CD4-positive, alpha-beta memory T cell (primary cell): ENCODE measurements at regions of chr2 and their contacts with region 1.

Region 1: GRCh38 chr2:68467077-68467960 is at the starts of genes APLF and FBXO48:
- DNase-seq: peak; percentile 98 to 100 (median 99)
- H3K4me3 ChIP-seq: peak within 1 kb of the TSS; percentile 85 to 98
- H3K4me3 Mint-ChIP-seq: peak within 1 kb of the TSS; percentile 90 to 97 (median 96)
- H3K27ac ChIP-seq: peak within 1 kb of the TSS; percentile 96
- H3K27ac Mint-ChIP-seq: peak within 1 kb of the TSS; percentile 89 to 98 (median 97)
- H3K4me1 ChIP-seq: peaks cover 45% of the 10 kb centered on the region
- H3K4me1 Mint-ChIP-seq: peaks cover 25 to 55% (median 38%) of the 10 kb centered on the region in 4 donors
- H3K27me3 ChIP-seq: no peaks in the 10 kb centered on the region
- H3K27me3 Mint-ChIP-seq: no peaks in the 10 kb centered on the region
- total RNA-seq, gene APLF: 8.2 to 9.5 TPM
- total RNA-seq, gene FBXO48: 6.4 to 6.5 TPM

Region 2: DNA sequence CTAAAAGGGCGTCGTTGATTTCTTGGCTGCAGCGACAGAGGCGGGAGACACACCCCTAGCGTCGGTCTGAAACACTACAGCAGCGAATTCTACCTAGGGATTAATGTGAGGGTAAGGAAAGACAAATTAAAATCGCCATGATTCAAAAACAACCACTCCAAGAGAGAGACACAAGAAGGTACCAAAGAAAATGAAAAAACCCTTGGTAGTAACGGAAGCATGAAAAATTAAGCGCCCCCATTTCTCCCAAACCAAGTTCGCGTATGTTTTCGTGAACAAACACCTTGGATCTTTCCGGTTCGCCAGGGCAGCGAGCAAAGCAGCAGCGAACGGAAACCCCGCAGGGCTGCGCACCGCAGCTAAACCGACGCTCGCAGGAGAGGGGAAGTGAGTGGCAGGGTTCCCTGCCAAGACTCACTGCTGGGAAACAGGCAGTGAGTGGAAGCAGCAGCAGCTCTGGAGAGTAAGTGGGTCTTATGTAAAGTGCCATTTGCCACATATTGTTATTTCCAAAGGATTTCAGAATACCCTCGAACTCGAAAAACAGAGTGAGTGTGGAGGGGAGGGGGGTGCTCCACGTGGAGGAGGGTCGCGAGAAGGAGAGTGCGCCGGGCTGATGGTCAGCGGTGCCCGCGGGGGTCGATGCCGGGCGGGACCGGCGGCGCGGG is 216.0 kb before region 1 on chr2:
- CTCF ChIA-PET with region 1: no interaction called
- POLR2A ChIA-PET with region 1: interaction called, 7 read pairs
- intact Hi-C with region 1: loop called (anchors 5 kb)
- DNase-seq: peak; percentile 81 to 93 (median 86)
- H3K4me3 ChIP-seq: peak overlapping the region; percentile 66 to 83
- H3K4me3 Mint-ChIP-seq: peak overlapping the region in 7 of 8 donors; percentile 87 to 100 (median 94)
- H3K27ac ChIP-seq: peak overlapping the region; percentile 91
- H3K27ac Mint-ChIP-seq: peak overlapping the region in 6 of 7 donors; percentile 91 to 99 (median 97)
- H3K4me1 ChIP-seq: peaks cover 70% of the 10 kb centered on the region
- H3K4me1 Mint-ChIP-seq: peaks cover 20 to 59% (median 34%) of the 10 kb centered on the region in 4 donors
- H3K27me3 ChIP-seq: no peaks in the 10 kb centered on the region
- H3K27me3 Mint-ChIP-seq: peaks cover 0 to 4% of the 10 kb centered on the region in 2 donors

Region 3: DNA sequence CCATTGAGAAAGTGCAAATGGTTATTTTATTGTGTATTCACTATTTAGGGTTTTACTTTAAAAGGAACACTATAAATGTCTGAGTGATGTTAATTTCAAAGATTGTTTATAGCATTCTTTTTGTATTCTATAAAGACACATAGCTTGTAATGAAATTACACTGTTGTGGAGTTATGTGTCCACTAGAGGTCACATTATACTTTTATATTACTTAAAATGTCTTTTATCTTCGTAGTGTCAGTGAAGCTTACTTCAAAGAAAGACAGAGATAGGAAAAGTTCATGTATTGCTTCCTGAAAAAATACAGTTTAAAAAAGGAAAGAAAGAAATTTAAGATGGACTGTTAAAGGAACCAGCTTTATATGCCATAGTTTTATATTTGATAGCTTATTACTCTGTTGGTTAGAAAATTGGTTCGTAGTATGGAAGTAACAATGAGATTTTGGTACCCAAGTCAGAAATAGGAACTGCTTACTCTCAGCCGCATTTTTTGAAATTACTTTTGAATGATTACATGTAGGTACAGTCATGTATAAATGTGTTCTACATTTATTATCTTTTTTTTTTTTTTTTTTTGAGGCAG is 20.5 kb after region 1 on chr2:
- CTCF ChIA-PET with region 1: interaction called, 38 read pairs
- POLR2A ChIA-PET with region 1: interaction called, 17 read pairs
- intact Hi-C with region 1: loop called (anchors 2 kb)
- DNase-seq: peak in 4 of 5 donors; percentile 24 to 39 (median 31)
- H3K4me3 ChIP-seq: no peak overlapping the region
- H3K4me3 Mint-ChIP-seq: peak overlapping the region in 1 of 8 donors; percentile 28
- H3K27ac ChIP-seq: no peak overlapping the region
- H3K27ac Mint-ChIP-seq: peak overlapping the region in 2 of 7 donors; percentile 35 to 38
- H3K4me1 ChIP-seq: no peaks in the 10 kb centered on the region
- H3K4me1 Mint-ChIP-seq: peaks cover 0 to 5% (median 1%) of the 10 kb centered on the region in 4 donors
- H3K27me3 ChIP-seq: no peaks in the 10 kb centered on the region
- H3K27me3 Mint-ChIP-seq: no peaks in the 10 kb centered on the region

Region 4: GRCh38 chr2:68709421-68709911 is 242.1 kb after region 1 on chr2:
- CTCF ChIA-PET with region 1: interaction called, 64 read pairs
- POLR2A ChIA-PET with region 1: interaction called, 5 read pairs
- intact Hi-C with region 1: loop called (anchors 2 kb)
- DNase-seq: peak in 3 of 5 donors; percentile 29 to 47 (median 40)
- H3K4me3 ChIP-seq: no peak overlapping the region
- H3K4me3 Mint-ChIP-seq: peak overlapping the region in 3 of 8 donors; percentile 27 to 67 (median 30)
- H3K27ac ChIP-seq: peak overlapping the region; percentile 24
- H3K27ac Mint-ChIP-seq: peak overlapping the region; percentile 60 to 82 (median 68)
- H3K4me1 ChIP-seq: peaks cover 10% of the 10 kb centered on the region
- H3K4me1 Mint-ChIP-seq: peaks cover 13 to 37% (median 20%) of the 10 kb centered on the region in 4 donors
- H3K27me3 ChIP-seq: no peaks in the 10 kb centered on the region
- H3K27me3 Mint-ChIP-seq: no peaks in the 10 kb centered on the region

Region 5: GRCh38 chr2:68751397-68752339 is 284.3 kb after region 1 on chr2:
- CTCF ChIA-PET with region 1: interaction called, 18 read pairs
- POLR2A ChIA-PET with region 1: interaction called, 8 read pairs
- intact Hi-C with region 1: loop called (anchors 1 kb)
- DNase-seq: peak; percentile 84 to 90 (median 85)
- H3K4me3 ChIP-seq: peak overlapping the region in 1 of 2 donors; percentile 5
- H3K4me3 Mint-ChIP-seq: peak overlapping the region in 7 of 8 donors; percentile 29 to 86 (median 62)
- H3K27ac ChIP-seq: peak overlapping the region; percentile 56
- H3K27ac Mint-ChIP-seq: peak overlapping the region; percentile 83 to 96 (median 94)
- H3K4me1 ChIP-seq: peaks cover 97% of the 10 kb centered on the region
- H3K4me1 Mint-ChIP-seq: peaks cover 73 to 96% (median 86%) of the 10 kb centered on the region in 4 donors
- H3K27me3 ChIP-seq: no peaks in the 10 kb centered on the region
- H3K27me3 Mint-ChIP-seq: no peaks in the 10 kb centered on the region

Region 6: GRCh38 chr2:68909793-68910674 is 442.7 kb after region 1 on chr2:
- CTCF ChIA-PET with region 1: interaction called, 36 read pairs
- POLR2A ChIA-PET with region 1: interaction called, 13 read pairs
- intact Hi-C with region 1: loop called (anchors 1 kb)
- DNase-seq: peak; percentile 43 to 69 (median 54)
- H3K4me3 ChIP-seq: no peak overlapping the region
- H3K4me3 Mint-ChIP-seq: peak overlapping the region in 5 of 8 donors; percentile 15 to 70 (median 55)
- H3K27ac ChIP-seq: no peak overlapping the region
- H3K27ac Mint-ChIP-seq: peak overlapping the region; percentile 70 to 92 (median 84)
- H3K4me1 ChIP-seq: peaks cover 76% of the 10 kb centered on the region
- H3K4me1 Mint-ChIP-seq: peaks cover 31 to 38% (median 36%) of the 10 kb centered on the region in 4 donors
- H3K27me3 ChIP-seq: no peaks in the 10 kb centered on the region
- H3K27me3 Mint-ChIP-seq: no peaks in the 10 kb centered on the region